Naive thymus-derived CD8-positive, alpha-beta T cell (primary cell): ENCODE measurements at regions of chr7 and their contacts with region 1.

Region 1: GRCh38 chr7:142782922-142783900 is 12.4 kb downstream of the PRSS2 start:
- DNase-seq: peak; percentile 61 to 90 (median 75)
- ATAC-seq: peak; percentile 23 to 38
- H3K4me3 Mint-ChIP-seq: peak overlapping the region; percentile 70 to 87 (median 84)
- H3K27ac Mint-ChIP-seq: peak overlapping the region; percentile 85 to 100 (median 99)
- H3K4me1 Mint-ChIP-seq: peaks cover 2 to 34% (median 7%) of the 10 kb centered on the region in 4 donors
- H3K27me3 Mint-ChIP-seq: no peaks in the 10 kb centered on the region

Region 2: GRCh38 chr7:142632291-142633134 is 150.7 kb before region 1 on chr7:
- POLR2A ChIA-PET with region 1: interaction called, 53 read pairs
- DNase-seq: peak; percentile 29 to 76 (median 60)
- ATAC-seq: peak; percentile 36 to 65
- H3K4me3 Mint-ChIP-seq: peak overlapping the region in 3 of 10 donors; percentile 20 to 64 (median 34)
- H3K27ac Mint-ChIP-seq: peak overlapping the region in 7 of 10 donors; percentile 58 to 91 (median 71)
- H3K4me1 Mint-ChIP-seq: peaks cover 4 to 19% (median 9%) of the 10 kb centered on the region in 4 donors
- H3K27me3 Mint-ChIP-seq: peaks cover 0 to 6% (median 1%) of the 10 kb centered on the region in 5 donors

Region 3: GRCh38 chr7:142711746-142712619 is 71.2 kb before region 1 on chr7:
- POLR2A ChIA-PET with region 1: interaction called, 41 read pairs
- DNase-seq: peak in 3 of 10 donors; percentile 15 to 44 (median 29)
- ATAC-seq: peak; percentile 76 to 82
- H3K4me3 Mint-ChIP-seq: peak overlapping the region; percentile 84 to 94 (median 90)
- H3K27ac Mint-ChIP-seq: peak overlapping the region; percentile 89 to 96 (median 95)
- H3K4me1 Mint-ChIP-seq: peaks cover 10 to 79% (median 61%) of the 10 kb centered on the region in 4 donors
- H3K27me3 Mint-ChIP-seq: no peaks in the 10 kb centered on the region

Region 4: GRCh38 chr7:142733271-142733670 is 49.9 kb before region 1 on chr7:
- POLR2A ChIA-PET with region 1: no interaction called
- DNase-seq: no peak
- ATAC-seq: no peak
- H3K4me3 Mint-ChIP-seq: no peak overlapping the region
- H3K27ac Mint-ChIP-seq: no peak overlapping the region
- H3K4me1 Mint-ChIP-seq: peaks cover 0 to under 1% (median 0%) of the 10 kb centered on the region in 4 donors
- H3K27me3 Mint-ChIP-seq: no peaks in the 10 kb centered on the region

Region 5: GRCh38 chr7:142760071-142760642 is 23.1 kb before region 1 on chr7:
- POLR2A ChIA-PET with region 1: no interaction called
- DNase-seq: no peak
- ATAC-seq: no peak
- H3K4me3 Mint-ChIP-seq: no peak overlapping the region
- H3K27ac Mint-ChIP-seq: no peak overlapping the region
- H3K4me1 Mint-ChIP-seq: no peaks in the 10 kb centered on the region
- H3K27me3 Mint-ChIP-seq: no peaks in the 10 kb centered on the region